ENCODE measurements at regions of chr6 and their contacts with region 1.

Region 1: GRCh38 chr6:79570129-79571029 is 33.1 kb upstream of the LCA5 start:
- DNase-seq: no peak
- ATAC-seq: peak; percentile 63
- H3K4me3 ChIP-seq: peak overlapping the region; percentile 30 to 34
- H3K27ac ChIP-seq: no peak overlapping the region
- H3K4me1 ChIP-seq: no peaks in the 10 kb centered on the region
- H3K27me3 ChIP-seq: no peaks in the 10 kb centered on the region

Region 2: GRCh38 chr6:79672631-79673111 is 102.3 kb after region 1 on chr6:
- intact Hi-C with region 1: loop called in 1 of 2 experiments (anchors 10 kb)
- DNase-seq: no peak
- ATAC-seq: no peak
- H3K4me3 ChIP-seq: no peak overlapping the region
- H3K27ac ChIP-seq: no peak overlapping the region
- H3K4me1 ChIP-seq: peaks cover 0 to 2% of the 10 kb centered on the region in 2 donors
- H3K27me3 ChIP-seq: no peaks in the 10 kb centered on the region

Region 3: GRCh38 chr6:79713701-79714322 is 143.4 kb after region 1 on chr6:
- intact Hi-C with region 1: loop called in 1 of 2 experiments (anchors 5 kb)
- DNase-seq: no peak
- ATAC-seq: peak; percentile 66
- H3K4me3 ChIP-seq: no peak overlapping the region
- H3K27ac ChIP-seq: no peak overlapping the region
- H3K4me1 ChIP-seq: no peaks in the 10 kb centered on the region
- H3K27me3 ChIP-seq: no peaks in the 10 kb centered on the region